ENCODE measurements at regions of chr11 and their contacts with region 1.

Region 1: DNA sequence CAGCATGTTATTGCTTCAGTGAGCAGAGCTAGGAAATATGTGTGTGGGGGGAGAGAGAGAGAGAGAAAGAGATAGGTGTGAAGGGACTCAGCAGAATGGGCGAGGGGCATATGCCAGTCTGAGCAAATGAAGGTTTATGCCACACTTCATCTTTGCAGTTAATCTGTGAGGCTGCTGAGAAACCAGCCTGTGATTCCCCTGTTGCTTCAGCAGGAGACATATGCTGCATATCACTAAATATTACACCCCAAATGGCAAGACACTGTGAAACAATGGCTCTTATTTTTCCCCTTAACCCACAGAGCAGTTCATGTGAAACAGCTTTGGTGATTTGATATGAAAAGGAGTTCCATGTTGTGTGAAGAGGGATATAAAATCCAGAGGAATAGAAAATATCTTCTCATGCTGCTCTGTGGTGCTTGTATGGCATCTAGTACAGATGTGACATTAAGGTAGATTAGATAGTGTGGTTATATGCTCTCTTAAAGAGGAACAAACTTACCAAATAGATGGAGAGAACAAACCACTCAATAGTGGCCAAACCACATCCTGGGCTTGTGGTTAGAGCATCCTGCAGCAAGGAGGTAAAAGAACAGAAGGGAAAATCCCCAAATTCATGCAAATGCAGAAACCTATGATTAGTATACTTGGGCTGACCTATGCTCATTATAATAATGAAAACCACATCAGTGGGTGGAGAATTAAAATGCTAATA is 864.2 kb downstream of the FAM181B start:
- DNase-seq: peak; percentile 93
- H3K4me3 Mint-ChIP-seq: peak overlapping the region; percentile 68
- H3K27ac Mint-ChIP-seq: peak overlapping the region; percentile 79
- H3K4me1 Mint-ChIP-seq: peaks cover 41% of the 10 kb centered on the region
- H3K27me3 Mint-ChIP-seq: peaks cover 5% of the 10 kb centered on the region

Region 2: DNA sequence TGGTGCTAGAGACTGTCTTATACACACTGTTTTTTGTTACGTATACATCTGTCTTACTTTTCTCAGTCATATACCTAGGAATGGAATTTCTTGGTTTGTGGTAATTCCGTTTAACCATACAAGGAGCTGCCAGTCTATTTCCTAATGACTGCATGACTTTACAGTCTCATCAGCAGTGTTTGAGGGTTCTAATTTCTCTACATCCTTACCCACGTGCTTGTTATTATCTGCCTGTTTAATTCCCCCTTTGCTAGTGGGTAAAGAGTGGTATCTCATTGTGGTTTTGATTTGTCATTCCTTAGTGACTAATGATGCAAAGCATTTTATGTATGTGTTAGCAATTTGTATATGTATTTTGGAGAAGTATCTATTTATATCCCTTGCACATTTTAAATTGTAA is 143.8 kb before region 1 on chr11:
- CTCF ChIA-PET with region 1: no interaction called
- POLR2A ChIA-PET with region 1: no interaction called
- intact Hi-C with region 1: no loop called
- DNase-seq: no peak
- H3K4me3 Mint-ChIP-seq: no peak overlapping the region
- H3K27ac Mint-ChIP-seq: no peak overlapping the region
- H3K4me1 Mint-ChIP-seq: no peaks in the 10 kb centered on the region
- H3K27me3 Mint-ChIP-seq: no peaks in the 10 kb centered on the region

Region 3: GRCh38 chr11:81822201-81822600 is 47.3 kb before region 1 on chr11:
- CTCF ChIA-PET with region 1: interaction called, 3 read pairs
- POLR2A ChIA-PET with region 1: no interaction called
- intact Hi-C with region 1: loop called (anchors 2 kb)
- DNase-seq: no peak
- H3K4me3 Mint-ChIP-seq: no peak overlapping the region
- H3K27ac Mint-ChIP-seq: no peak overlapping the region
- H3K4me1 Mint-ChIP-seq: peaks cover 5% of the 10 kb centered on the region
- H3K27me3 Mint-ChIP-seq: no peaks in the 10 kb centered on the region

Region 4: GRCh38 chr11:81886406-81887075 is 17.0 kb after region 1 on chr11:
- CTCF ChIA-PET with region 1: no interaction called
- POLR2A ChIA-PET with region 1: interaction called, 3 read pairs
- intact Hi-C with region 1: loop called (anchors 1 kb)
- DNase-seq: peak; percentile 10
- H3K4me3 Mint-ChIP-seq: no peak overlapping the region
- H3K27ac Mint-ChIP-seq: no peak overlapping the region
- H3K4me1 Mint-ChIP-seq: peaks cover 9% of the 10 kb centered on the region
- H3K27me3 Mint-ChIP-seq: no peaks in the 10 kb centered on the region

Region 5: DNA sequence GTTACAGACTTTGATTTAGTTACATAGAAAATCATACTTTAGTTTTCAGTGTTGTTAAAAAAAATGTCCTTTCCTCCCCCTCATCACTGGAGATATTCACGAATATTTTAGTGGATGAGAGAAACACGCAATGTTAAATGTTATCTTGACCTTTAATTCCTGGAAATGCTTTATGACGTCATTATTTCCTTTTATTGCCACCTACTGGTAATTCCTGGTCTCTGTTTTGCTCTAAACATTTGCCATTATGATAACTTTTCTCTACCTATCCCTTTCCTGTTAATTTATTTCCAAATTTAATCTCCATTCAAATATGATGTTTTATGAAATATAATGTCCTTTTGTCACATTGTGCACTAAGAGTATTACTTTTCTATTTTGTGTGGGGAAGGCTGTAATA is 93.5 kb after region 1 on chr11:
- CTCF ChIA-PET with region 1: no interaction called
- POLR2A ChIA-PET with region 1: no interaction called
- intact Hi-C with region 1: loop called (anchors 2 kb)
- DNase-seq: no peak
- H3K4me3 Mint-ChIP-seq: no peak overlapping the region
- H3K27ac Mint-ChIP-seq: no peak overlapping the region
- H3K4me1 Mint-ChIP-seq: peaks cover 18% of the 10 kb centered on the region
- H3K27me3 Mint-ChIP-seq: no peaks in the 10 kb centered on the region

Region 6: DNA sequence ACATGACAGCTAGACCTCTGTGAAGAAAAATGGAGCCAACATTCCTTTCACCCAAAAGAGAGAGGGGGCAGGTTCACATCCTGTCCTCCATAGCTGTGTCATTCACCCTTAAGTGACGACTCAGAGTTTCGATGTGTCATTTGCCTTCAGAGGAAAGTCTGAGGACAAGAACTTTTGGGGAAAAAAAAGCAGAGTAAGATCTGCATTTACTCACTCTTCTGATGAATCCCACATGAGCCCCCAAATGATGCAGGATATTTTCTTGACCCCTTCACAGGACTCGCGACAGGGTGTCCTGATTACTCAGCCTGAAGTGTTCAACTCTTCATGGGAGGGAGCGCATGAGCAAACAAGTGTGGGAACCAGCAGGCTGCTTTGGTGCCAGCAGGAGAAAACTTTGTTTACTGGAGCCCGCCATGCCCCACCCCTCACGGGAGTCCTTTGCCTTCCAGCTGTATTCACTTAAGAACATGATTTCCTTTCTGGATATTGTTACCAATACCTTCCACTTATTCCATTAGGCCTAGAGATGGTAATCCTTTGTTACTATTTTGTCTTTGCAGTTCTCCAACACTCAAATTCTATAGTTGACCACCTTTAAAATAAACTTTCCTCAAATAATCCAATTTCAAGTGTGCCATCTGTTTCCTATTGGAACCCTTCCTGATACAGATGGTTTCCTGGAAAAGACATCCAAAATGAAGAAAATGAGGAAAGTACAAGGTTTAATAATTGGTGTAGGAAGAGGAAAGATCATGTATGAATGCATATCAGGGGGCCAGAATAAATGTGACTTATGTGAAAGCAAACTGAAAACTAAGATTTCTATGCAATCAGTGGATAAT is 134.4 kb after region 1 on chr11:
- CTCF ChIA-PET with region 1: no interaction called
- POLR2A ChIA-PET with region 1: no interaction called
- intact Hi-C with region 1: loop called (anchors 1 kb)
- DNase-seq: peak; percentile 26
- H3K4me3 Mint-ChIP-seq: no peak overlapping the region
- H3K27ac Mint-ChIP-seq: peak overlapping the region; percentile 73
- H3K4me1 Mint-ChIP-seq: peaks cover 20% of the 10 kb centered on the region
- H3K27me3 Mint-ChIP-seq: no peaks in the 10 kb centered on the region

Region 7: DNA sequence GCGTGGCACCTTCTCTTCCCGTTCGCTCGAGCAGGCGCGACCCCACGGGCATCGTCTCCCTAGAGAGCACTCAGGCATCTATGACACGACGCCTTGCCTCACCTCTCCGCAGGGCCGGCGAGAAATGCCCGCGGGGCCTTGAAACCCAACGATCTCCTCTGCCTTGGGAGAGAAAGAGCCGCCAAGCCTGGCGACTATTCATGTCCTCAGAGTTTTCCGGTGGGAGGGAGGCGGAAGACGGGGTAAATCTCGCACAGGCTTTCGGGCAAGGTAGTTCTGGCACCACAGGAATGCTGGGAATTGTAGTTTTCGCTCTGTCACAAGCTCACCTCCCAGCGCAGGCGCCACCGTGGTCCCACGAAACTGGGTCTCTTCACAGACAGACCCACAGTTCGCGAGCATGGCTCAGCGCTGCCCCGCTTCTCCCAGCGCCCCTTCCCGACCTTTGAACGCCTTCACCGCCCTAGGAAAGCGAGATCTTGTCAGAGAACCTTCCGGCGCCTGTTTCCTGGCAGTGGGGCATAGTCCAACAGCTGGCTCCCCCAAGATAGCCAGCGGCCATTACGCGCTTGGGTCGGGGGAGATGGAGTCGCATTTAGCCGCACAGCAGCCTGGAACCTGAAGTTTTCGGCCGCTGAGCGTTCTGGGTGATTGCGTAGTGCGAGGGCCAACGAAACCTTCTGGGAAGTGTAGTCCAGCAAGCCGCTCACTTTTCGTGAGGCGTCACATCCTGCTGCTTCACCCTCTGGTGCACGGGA is 1416.4 kb after region 1 on chr11 and contains the start of gene CCDC90B:
- CTCF ChIA-PET with region 1: no interaction called
- POLR2A ChIA-PET with region 1: no interaction called
- intact Hi-C with region 1: loop called (anchors 1 kb)
- DNase-seq: peak; percentile 96
- H3K4me3 Mint-ChIP-seq: peak within 1 kb of the TSS; percentile 92
- H3K27ac Mint-ChIP-seq: peak within 1 kb of the TSS; percentile 99
- H3K4me1 Mint-ChIP-seq: peaks cover 35% of the 10 kb centered on the region
- H3K27me3 Mint-ChIP-seq: no peaks in the 10 kb centered on the region
- total RNA-seq, gene CCDC90B: 29.2 to 32.3 TPM